PC-9 (cell line): ENCODE measurements at regions of chr15 and their contacts with region 1.

Region 1: DNA sequence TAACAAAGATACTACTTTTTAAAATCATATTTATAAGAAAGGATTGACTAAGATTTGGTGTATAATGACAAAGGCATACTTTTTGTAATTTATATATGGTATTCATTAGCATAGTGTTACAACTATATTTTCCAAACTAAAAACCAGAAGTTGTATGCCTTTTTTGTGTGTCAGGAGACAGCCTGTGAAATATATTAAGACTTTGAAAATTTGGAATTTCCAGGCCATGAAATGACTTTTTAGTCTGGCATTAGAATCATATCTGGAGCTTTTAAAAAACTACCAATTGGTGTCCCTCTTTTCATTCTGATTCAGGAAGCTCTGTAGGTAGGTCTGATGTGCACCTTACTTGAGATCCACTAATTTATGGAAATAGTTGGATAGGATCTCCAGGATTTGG is 41.9 kb downstream of the CALML4 start:
- DNase-seq: no peak
- H3K4me3 ChIP-seq: no peak overlapping the region
- H3K27ac ChIP-seq: no peak overlapping the region
- H3K4me1 ChIP-seq: no peaks in the 10 kb centered on the region
- H3K27me3 ChIP-seq: no peaks in the 10 kb centered on the region
- CTCF ChIP-seq: no peak

Region 2: DNA sequence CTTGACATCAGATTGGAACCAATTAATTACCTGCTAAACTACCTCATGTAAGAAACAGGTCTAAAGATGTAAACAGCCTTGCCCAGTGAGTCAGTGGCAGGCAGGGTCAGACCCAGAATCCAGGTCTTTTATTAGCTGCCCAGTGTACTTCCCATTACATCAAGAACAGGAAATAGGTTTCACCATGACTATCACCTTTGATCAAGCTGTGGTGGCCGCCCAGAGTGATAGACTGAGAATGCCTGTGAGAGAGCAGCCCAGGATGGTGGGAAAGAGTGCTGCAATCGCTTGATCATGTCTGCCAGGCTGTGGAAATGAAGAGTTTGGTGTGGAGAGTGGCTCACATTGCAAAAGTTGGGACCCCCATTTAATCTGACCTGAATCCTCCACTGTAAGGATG is 170.4 kb before region 1 on chr15:
- CTCF ChIA-PET with region 1: no interaction called
- POLR2A ChIA-PET with region 1: no interaction called
- intact Hi-C with region 1: no loop called
- DNase-seq: peak in 1 of 2 experiments; percentile 45
- H3K4me3 ChIP-seq: no peak overlapping the region
- H3K27ac ChIP-seq: no peak overlapping the region
- H3K4me1 ChIP-seq: peaks cover 4% of the 10 kb centered on the region
- H3K27me3 ChIP-seq: no peaks in the 10 kb centered on the region
- CTCF ChIP-seq: no peak

Region 3: GRCh38 chr15:68062946-68063465 is 100.2 kb before region 1 on chr15:
- CTCF ChIA-PET with region 1: interaction called, 16 read pairs
- POLR2A ChIA-PET with region 1: no interaction called
- intact Hi-C with region 1: no loop called
- DNase-seq: no peak
- H3K4me3 ChIP-seq: no peak overlapping the region
- H3K27ac ChIP-seq: no peak overlapping the region
- H3K4me1 ChIP-seq: no peaks in the 10 kb centered on the region
- H3K27me3 ChIP-seq: no peaks in the 10 kb centered on the region
- CTCF ChIP-seq: no peak